Natural killer cell (primary cell): ENCODE measurements at regions of chr6 and their contacts with region 1.

Region 1: DNA sequence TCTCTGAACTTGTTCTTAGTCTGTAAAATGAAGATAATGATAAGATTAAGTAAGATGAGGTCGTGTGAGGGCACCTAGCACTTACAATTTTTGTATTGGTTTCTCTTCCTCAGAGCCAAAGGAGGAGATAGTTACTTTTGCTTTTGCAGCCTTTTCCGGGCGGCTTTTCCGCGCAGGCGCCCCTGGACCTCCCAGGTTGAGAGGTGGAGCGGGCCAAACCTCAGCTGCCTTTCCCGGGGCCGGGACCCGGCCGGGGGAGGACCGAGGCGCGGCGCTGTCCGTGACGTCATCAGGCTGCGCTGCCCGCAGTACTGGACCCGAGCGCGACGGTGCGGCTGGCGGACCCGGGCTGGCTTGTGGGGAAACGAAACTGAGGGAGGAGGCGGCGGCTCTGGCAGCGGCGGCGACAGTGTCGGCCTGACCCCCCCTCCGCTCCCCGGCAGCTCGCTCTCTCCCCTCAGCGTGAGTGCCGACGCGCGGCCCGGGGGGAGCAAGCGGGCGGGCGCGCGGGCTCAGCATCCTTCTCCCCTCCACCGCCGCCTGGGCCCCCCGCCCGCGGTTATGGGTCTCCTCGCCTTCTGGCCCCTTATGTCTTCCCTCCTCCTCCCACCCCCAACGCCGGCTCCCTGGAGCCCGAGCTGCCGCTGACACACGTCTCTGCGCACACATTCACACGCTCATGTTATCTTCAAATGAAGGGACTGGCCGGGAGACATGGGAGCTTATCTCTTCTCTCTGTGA is at the start of gene CMTR1:
- DNase-seq: peak; percentile 96 to 98
- ATAC-seq: peak; percentile 85 to 94 (median 88)
- H3K4me3 ChIP-seq: peak within 1 kb of the TSS; percentile 55
- H3K4me3 Mint-ChIP-seq: peak within 1 kb of the TSS; percentile 76
- H3K27ac ChIP-seq: peak within 1 kb of the TSS; percentile 82
- H3K27ac Mint-ChIP-seq: peak within 1 kb of the TSS; percentile 80 to 85
- H3K4me1 ChIP-seq: peaks cover 18% of the 10 kb centered on the region
- H3K4me1 Mint-ChIP-seq: peaks cover 31 to 42% of the 10 kb centered on the region in 2 donors
- H3K27me3 ChIP-seq: no peaks in the 10 kb centered on the region
- H3K27me3 Mint-ChIP-seq: peaks cover 6 to 13% of the 10 kb centered on the region in 2 donors
- CTCF ChIP-seq: no peak
- total RNA-seq, gene CMTR1: 85.0 to 111 (median 94.7) TPM

Region 2: GRCh38 chr6:37381579-37381978 is 51.5 kb before region 1 on chr6:
- intact Hi-C with region 1: loop called (anchors 2 kb)
- DNase-seq: peak in 1 of 2 donors; percentile 74
- ATAC-seq: peak; percentile 52 to 67 (median 66)
- H3K4me3 ChIP-seq: no peak overlapping the region
- H3K4me3 Mint-ChIP-seq: no peak overlapping the region
- H3K27ac ChIP-seq: no peak overlapping the region
- H3K27ac Mint-ChIP-seq: no peak overlapping the region
- H3K4me1 ChIP-seq: no peaks in the 10 kb centered on the region
- H3K4me1 Mint-ChIP-seq: no peaks in the 10 kb centered on the region
- H3K27me3 ChIP-seq: no peaks in the 10 kb centered on the region
- H3K27me3 Mint-ChIP-seq: no peaks in the 10 kb centered on the region
- CTCF ChIP-seq: peak; percentile 58

Region 3: GRCh38 chr6:37463110-37463509 is 30.0 kb after region 1 on chr6:
- intact Hi-C with region 1: no loop called
- DNase-seq: no peak
- ATAC-seq: no peak
- H3K4me3 ChIP-seq: no peak overlapping the region
- H3K4me3 Mint-ChIP-seq: no peak overlapping the region
- H3K27ac ChIP-seq: no peak overlapping the region
- H3K27ac Mint-ChIP-seq: peak overlapping the region in 1 of 2 donors; percentile 8
- H3K4me1 ChIP-seq: no peaks in the 10 kb centered on the region
- H3K4me1 Mint-ChIP-seq: peaks cover 0 to 6% of the 10 kb centered on the region in 2 donors
- H3K27me3 ChIP-seq: no peaks in the 10 kb centered on the region
- H3K27me3 Mint-ChIP-seq: no peaks in the 10 kb centered on the region
- CTCF ChIP-seq: no peak

Region 4: DNA sequence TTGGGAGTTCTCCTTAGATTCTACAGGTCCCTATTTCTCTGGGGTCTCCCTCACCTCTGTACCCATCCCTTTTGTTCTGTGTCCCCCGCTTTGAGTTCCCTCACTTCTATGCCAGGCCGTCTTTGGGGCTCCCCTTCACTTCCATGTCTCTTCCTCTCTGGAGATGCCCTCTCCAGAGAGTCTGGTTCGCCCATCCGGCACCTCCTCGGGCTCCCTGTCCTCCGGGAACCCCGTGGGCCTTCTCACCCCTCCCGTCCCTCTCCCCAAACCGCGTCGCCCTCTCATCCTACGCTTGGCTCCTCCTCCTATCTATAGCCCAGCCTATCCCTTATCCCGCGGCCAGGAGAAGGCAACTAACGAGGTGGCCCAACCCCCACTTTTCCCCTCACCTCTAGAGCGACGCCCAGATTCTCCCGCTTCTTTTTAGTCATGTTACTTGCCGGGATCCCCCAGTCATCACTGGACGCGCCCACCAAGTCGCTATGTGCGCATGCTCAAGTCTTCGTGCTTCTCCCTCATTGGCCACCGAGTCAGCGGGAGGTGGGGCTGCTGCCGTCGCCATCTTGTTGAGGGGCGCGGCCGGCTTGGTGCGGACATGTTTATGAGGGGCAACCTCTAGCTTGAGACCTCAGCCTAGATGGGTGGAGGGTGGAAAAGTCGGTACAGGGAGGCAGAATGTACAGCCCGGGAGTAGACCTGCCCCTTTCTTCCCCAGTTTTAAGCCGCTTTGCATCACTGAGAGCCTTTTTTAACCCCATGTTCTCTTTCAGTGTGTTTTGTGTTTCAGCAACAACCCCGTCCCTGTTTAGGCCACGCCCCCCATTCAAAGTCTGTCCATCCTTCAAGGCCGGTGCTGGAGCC is 66.6 kb after region 1 on chr6 and contains the start of gene CCDC167:
- intact Hi-C with region 1: loop called (anchors 5 kb)
- DNase-seq: peak; percentile 91 to 98
- ATAC-seq: peak; percentile 70 to 81 (median 71)
- H3K4me3 ChIP-seq: peak within 1 kb of the TSS; percentile 65
- H3K4me3 Mint-ChIP-seq: peak within 1 kb of the TSS; percentile 100
- H3K27ac ChIP-seq: peak within 1 kb of the TSS; percentile 58
- H3K27ac Mint-ChIP-seq: peak within 1 kb of the TSS; percentile 93 to 100
- H3K4me1 ChIP-seq: peaks cover 51% of the 10 kb centered on the region
- H3K4me1 Mint-ChIP-seq: peaks cover 49 to 53% of the 10 kb centered on the region in 2 donors
- H3K27me3 ChIP-seq: no peaks in the 10 kb centered on the region
- H3K27me3 Mint-ChIP-seq: no peaks in the 10 kb centered on the region
- CTCF ChIP-seq: no peak
- total RNA-seq, gene CCDC167: 10.2 to 27.4 (median 19.4) TPM